ENCODE measurements at regions of chr2 and their contacts with region 1.

Region 1: GRCh38 chr2:224753743-224754540 is 37.8 kb upstream of the CCDC195 start:
- DNase-seq: no peak
- H3K4me3 ChIP-seq: no peak overlapping the region
- H3K27ac ChIP-seq: no peak overlapping the region
- H3K4me1 ChIP-seq: no peaks in the 10 kb centered on the region
- H3K27me3 ChIP-seq: no peaks in the 10 kb centered on the region
- CTCF ChIP-seq: no peak
- POLR2A ChIP-seq: no peak

Region 2: DNA sequence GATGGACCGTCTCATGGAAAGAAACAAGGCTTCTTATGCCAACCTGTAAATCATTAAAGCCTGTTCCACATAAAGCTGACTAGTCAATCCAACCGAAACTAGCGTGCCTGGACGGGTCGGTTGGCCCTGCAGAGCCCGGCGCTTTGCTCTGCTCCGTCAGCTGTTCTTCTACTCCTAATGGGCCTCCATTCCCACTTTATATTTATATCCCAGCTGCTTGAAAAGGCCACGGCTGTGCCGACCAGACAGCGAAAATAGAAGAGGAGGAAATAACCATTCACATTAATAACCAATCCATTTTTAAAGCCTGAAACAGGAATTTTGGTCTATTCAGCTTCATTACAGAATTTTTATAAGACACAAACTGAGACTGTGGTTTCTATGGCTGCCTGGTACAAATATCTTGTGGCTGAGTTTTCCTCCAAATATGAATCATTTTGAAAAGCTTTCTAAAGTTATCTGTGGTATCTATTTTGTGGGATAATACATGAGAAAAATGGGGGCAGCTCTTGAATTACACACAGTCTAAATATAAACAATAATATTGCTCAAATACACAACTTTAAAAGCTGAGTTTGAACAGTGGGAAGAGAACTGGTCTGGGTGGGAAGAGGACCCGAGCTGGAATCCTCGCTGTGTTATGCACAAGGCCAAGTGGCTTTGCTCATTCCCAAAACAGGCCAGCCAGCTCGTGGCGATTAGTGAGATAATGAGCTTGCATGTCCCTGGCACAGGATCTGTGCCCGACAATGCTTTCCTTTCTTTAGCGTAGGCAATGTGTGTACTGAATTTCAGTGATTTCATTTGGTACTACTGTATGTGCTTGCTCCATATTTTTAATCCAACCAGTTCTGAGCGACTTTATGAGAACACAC is 341.6 kb before region 1 on chr2:
- intact Hi-C with region 1: no loop called
- DNase-seq: no peak
- H3K4me3 ChIP-seq: peak overlapping the region in 1 of 4 donors; percentile 24
- H3K27ac ChIP-seq: peak overlapping the region; percentile 68 to 85 (median 80)
- H3K4me1 ChIP-seq: peaks cover 7 to 43% (median 11%) of the 10 kb centered on the region in 3 donors
- H3K27me3 ChIP-seq: no peaks in the 10 kb centered on the region
- CTCF ChIP-seq: no peak
- POLR2A ChIP-seq: no peak

Region 3: GRCh38 chr2:225027061-225027762 is 273.3 kb after region 1 on chr2:
- intact Hi-C with region 1: no loop called
- DNase-seq: no peak
- H3K4me3 ChIP-seq: no peak overlapping the region
- H3K27ac ChIP-seq: no peak overlapping the region
- H3K4me1 ChIP-seq: peaks cover 0 to 3% (median 0%) of the 10 kb centered on the region in 3 donors
- H3K27me3 ChIP-seq: no peaks in the 10 kb centered on the region
- CTCF ChIP-seq: no peak
- POLR2A ChIP-seq: no peak

Region 4: GRCh38 chr2:225056330-225057065 is 302.6 kb after region 1 on chr2:
- intact Hi-C with region 1: loop called (anchors 5 kb)
- DNase-seq: no peak
- H3K4me3 ChIP-seq: no peak overlapping the region
- H3K27ac ChIP-seq: no peak overlapping the region
- H3K4me1 ChIP-seq: peaks cover 0 to 4% (median 0%) of the 10 kb centered on the region in 3 donors
- H3K27me3 ChIP-seq: no peaks in the 10 kb centered on the region
- CTCF ChIP-seq: no peak
- POLR2A ChIP-seq: no peak

Region 5: GRCh38 chr2:225458431-225459117 is 704.6 kb after region 1 on chr2:
- intact Hi-C with region 1: no loop called
- DNase-seq: no peak
- H3K4me3 ChIP-seq: no peak overlapping the region
- H3K27ac ChIP-seq: no peak overlapping the region
- H3K4me1 ChIP-seq: no peaks in the 10 kb centered on the region
- H3K27me3 ChIP-seq: no peaks in the 10 kb centered on the region
- CTCF ChIP-seq: no peak
- POLR2A ChIP-seq: no peak